Left cardiac atrium (tissue), 4 donors: ENCODE measurements at regions of chr20 and their contacts with region 1.

Region 1: GRCh38 chr20:20360464-20360863 is 7.4 kb upstream of the INSM1 start:
- DNase-seq: no peak
- ATAC-seq: peak; percentile 82 to 84

Region 2: DNA sequence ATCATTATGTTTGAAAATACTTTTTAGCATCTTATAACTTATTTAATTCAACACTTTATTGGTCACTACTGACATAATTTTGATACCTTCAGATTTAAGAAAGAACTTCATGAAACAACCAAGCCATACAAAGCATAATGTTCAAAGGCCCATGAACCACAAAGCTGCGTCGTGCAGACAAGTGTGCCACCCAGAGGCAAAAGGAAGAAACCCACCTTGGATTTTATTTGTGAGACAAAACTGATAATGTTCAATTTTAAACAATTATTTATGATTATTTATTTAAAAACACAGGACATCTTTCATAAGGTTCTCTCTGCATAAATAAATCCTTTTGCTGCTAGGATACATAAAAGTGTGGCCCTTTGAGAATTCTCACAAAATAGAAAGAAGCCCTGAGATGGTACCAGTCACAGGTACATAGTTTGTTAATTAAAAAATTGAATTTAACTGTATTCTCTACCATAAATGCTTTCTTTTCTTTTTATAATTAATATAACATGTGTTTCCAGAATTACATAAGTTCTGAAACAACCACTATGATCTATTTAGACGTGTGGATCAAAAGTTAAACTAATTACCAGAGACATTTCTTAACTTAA is 208.2 kb after region 1 on chr20:
- intact Hi-C with region 1: loop called (anchors 2 to 10 kb)
- DNase-seq: no peak
- ATAC-seq: no peak